ENCODE measurements at regions of chr10 and their contacts with region 1.

Region 1: GRCh38 chr10:42753126-42753506 is 29.5 kb upstream of the BMS1 start:
- DNase-seq: peak; percentile 77
- H3K4me3 ChIP-seq: peak overlapping the region in 1 of 3 experiments; percentile 36
- H3K27ac ChIP-seq: no peak overlapping the region
- H3K4me1 ChIP-seq: peaks cover 10% of the 10 kb centered on the region
- H3K27me3 ChIP-seq: peaks cover 22 to 35% of the 10 kb centered on the region in 2 experiments
- CTCF ChIP-seq: peak; percentile 89 to 93
- POLR2A ChIP-seq: no peak

Region 2: GRCh38 chr10:42638055-42638820 is 114.9 kb before region 1 on chr10 and contains the start of gene ZNF33B:
- CTCF ChIA-PET with region 1: interaction called, 3 read pairs
- POLR2A ChIA-PET with region 1: no interaction called
- dilution Hi-C with region 1: no loop called
- intact Hi-C with region 1: loop called (anchors 1 kb)
- DNase-seq: peak; percentile 95
- H3K4me3 ChIP-seq: peak within 1 kb of the TSS; percentile 42 to 82 (median 56)
- H3K27ac ChIP-seq: peak within 1 kb of the TSS; percentile 42
- H3K4me1 ChIP-seq: peaks cover 8% of the 10 kb centered on the region
- H3K27me3 ChIP-seq: peaks cover 0 to 2% of the 10 kb centered on the region in 2 experiments
- CTCF ChIP-seq: no peak
- POLR2A ChIP-seq: peak; percentile 79
- total RNA-seq, gene ZNF33B: 15.1 and 15.3 TPM in 2 replicates

Region 3: GRCh38 chr10:42732266-42732665 is 20.9 kb before region 1 on chr10:
- CTCF ChIA-PET with region 1: no interaction called
- POLR2A ChIA-PET with region 1: no interaction called
- dilution Hi-C with region 1: no loop called
- intact Hi-C with region 1: loop called (anchors 2 kb)
- DNase-seq: no peak
- H3K4me3 ChIP-seq: no peak overlapping the region
- H3K27ac ChIP-seq: no peak overlapping the region
- H3K4me1 ChIP-seq: no peaks in the 10 kb centered on the region
- H3K27me3 ChIP-seq: no peaks in the 10 kb centered on the region
- CTCF ChIP-seq: no peak
- POLR2A ChIP-seq: no peak

Region 4: GRCh38 chr10:42769653-42770052 is 16.5 kb after region 1 on chr10:
- CTCF ChIA-PET with region 1: interaction called, 11 read pairs
- POLR2A ChIA-PET with region 1: no interaction called
- dilution Hi-C with region 1: no loop called
- intact Hi-C with region 1: no loop called
- DNase-seq: no peak
- H3K4me3 ChIP-seq: no peak overlapping the region
- H3K27ac ChIP-seq: no peak overlapping the region
- H3K4me1 ChIP-seq: no peaks in the 10 kb centered on the region
- H3K27me3 ChIP-seq: no peaks in the 10 kb centered on the region
- CTCF ChIP-seq: no peak
- POLR2A ChIP-seq: no peak

Region 5: GRCh38 chr10:42782446-42783180 is 29.5 kb after region 1 on chr10 and contains the start of gene BMS1:
- CTCF ChIA-PET with region 1: interaction called, 36 read pairs
- POLR2A ChIA-PET with region 1: no interaction called
- dilution Hi-C with region 1: no loop called
- intact Hi-C with region 1: loop called (anchors 1 kb)
- DNase-seq: peak; percentile 95
- H3K4me3 ChIP-seq: peak within 1 kb of the TSS; percentile 52 to 78 (median 68)
- H3K27ac ChIP-seq: peak within 1 kb of the TSS; percentile 87
- H3K4me1 ChIP-seq: peaks cover 11% of the 10 kb centered on the region
- H3K27me3 ChIP-seq: peaks cover 0 to 1% of the 10 kb centered on the region in 2 experiments
- CTCF ChIP-seq: no peak
- POLR2A ChIP-seq: peak; percentile 70
- total RNA-seq, gene BMS1: 22.4 and 23.4 TPM in 2 replicates

Region 6: GRCh38 chr10:42816917-42817316 is 63.8 kb after region 1 on chr10:
- CTCF ChIA-PET with region 1: no interaction called
- POLR2A ChIA-PET with region 1: no interaction called
- dilution Hi-C with region 1: no loop called
- intact Hi-C with region 1: no loop called
- DNase-seq: no peak
- H3K4me3 ChIP-seq: no peak overlapping the region
- H3K27ac ChIP-seq: no peak overlapping the region
- H3K4me1 ChIP-seq: no peaks in the 10 kb centered on the region
- H3K27me3 ChIP-seq: no peaks in the 10 kb centered on the region
- CTCF ChIP-seq: no peak
- POLR2A ChIP-seq: no peak

Region 7: DNA sequence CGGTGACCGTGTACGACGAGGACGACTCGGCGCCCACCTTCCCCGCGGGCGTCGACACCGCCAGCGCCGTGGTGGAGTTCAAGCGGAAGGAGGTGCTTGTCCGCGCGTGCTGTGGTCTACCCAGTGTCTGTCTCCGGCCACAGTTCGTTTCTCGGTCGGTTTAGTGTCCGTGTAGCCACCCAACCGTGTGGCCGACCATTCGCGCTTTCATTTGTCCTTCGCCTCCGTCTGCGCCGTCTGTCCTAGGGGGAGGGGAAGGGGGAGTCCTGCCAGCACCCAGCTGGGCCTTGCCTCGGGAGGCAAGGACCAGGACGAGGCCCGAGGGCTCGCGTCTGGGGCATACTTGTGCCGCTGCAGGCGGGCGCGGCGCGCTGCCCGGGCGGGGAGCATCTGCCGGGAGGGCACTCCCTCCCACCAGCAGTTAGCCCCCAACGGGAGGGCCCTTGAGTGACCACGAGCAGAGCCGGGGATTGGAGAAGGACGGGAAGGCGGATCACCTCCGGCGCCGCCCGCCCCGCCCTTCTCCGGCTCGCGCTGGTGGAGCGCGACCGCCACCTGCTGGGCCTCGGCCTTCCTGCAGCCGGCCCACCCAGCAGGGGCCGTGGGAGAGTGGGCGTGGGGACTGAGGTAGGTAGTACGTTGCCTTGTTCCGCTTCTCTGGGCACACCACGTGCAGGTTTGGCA is 352.1 kb after region 1 on chr10:
- CTCF ChIA-PET with region 1: interaction called, 12 read pairs
- POLR2A ChIA-PET with region 1: no interaction called
- dilution Hi-C with region 1: no loop called
- intact Hi-C with region 1: loop called (anchors 1 kb)
- DNase-seq: peak; percentile 62
- H3K4me3 ChIP-seq: peak overlapping the region in 2 of 3 experiments; percentile 35 to 38
- H3K27ac ChIP-seq: no peak overlapping the region
- H3K4me1 ChIP-seq: peaks cover 9% of the 10 kb centered on the region
- H3K27me3 ChIP-seq: peaks cover 1 to 8% of the 10 kb centered on the region in 2 experiments
- CTCF ChIP-seq: peak; percentile 96 to 99
- POLR2A ChIP-seq: no peak